ENCODE measurements at regions of chr2 and their contacts with region 1.

Region 1: GRCh38 chr2:7665880-7666279 is 748.7 kb downstream of the RNF144A start:
- DNase-seq: peak; percentile 41
- H3K4me3 ChIP-seq: no peak overlapping the region
- H3K27ac ChIP-seq: no peak overlapping the region
- H3K4me1 ChIP-seq: peaks cover 21% of the 10 kb centered on the region
- CTCF ChIP-seq: no peak; the same call in 1 of the 2 replicates

Region 2: DNA sequence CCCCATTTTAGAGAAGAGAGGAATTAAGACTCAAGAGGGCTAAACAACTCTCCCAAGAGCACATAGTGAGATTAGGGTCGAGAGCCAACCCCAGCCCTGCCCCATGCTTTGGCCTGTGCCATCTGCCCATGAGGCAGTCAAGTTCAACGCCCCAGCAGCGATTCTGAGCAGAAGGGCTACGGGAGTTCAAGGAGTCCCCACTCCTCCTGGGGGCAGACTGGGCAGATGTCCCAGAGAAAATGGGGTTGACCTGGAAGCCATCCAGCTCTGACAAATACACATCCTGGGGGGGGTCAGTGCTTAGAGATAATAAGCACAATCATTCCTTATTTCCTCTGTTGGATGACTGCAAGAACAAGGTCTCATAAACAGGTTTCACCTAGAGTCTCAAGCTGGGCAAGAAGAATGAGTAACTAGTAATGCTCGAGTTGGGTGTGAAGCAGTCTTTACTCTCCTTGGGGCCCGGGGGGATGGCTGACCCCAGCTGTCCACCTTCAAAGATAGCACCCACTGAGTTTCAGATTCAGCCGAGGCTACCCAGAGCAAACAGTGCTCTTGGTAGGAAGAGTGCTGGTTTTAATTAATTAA is 32.2 kb before region 1 on chr2:
- CTCF ChIA-PET with region 1: no interaction called
- POLR2A ChIA-PET with region 1: interaction called, 6 read pairs
- intact Hi-C with region 1: loop called (anchors 1 kb)
- DNase-seq: peak; percentile 25
- H3K4me3 ChIP-seq: no peak overlapping the region
- H3K27ac ChIP-seq: peak overlapping the region; percentile 62
- H3K4me1 ChIP-seq: peaks cover 34% of the 10 kb centered on the region
- CTCF ChIP-seq: no peak

Region 3: GRCh38 chr2:7857904-7858303 is 192.0 kb after region 1 on chr2:
- CTCF ChIA-PET with region 1: no interaction called
- POLR2A ChIA-PET with region 1: no interaction called
- intact Hi-C with region 1: no loop called
- DNase-seq: no peak
- H3K4me3 ChIP-seq: no peak overlapping the region
- H3K27ac ChIP-seq: no peak overlapping the region
- H3K4me1 ChIP-seq: peaks cover 9% of the 10 kb centered on the region
- CTCF ChIP-seq: no peak